B cell (primary cell): ENCODE measurements at regions of chr6 and their contacts with region 1.

Region 1: GRCh38 chr6:69895396-69895795 is 29.0 kb downstream of the COL19A1 start:
- DNase-seq: no peak
- ATAC-seq: no peak
- H3K4me3 ChIP-seq: no peak overlapping the region
- H3K4me3 Mint-ChIP-seq: no peak overlapping the region
- H3K27ac ChIP-seq: peak overlapping the region in 1 of 2 donors; percentile 73
- H3K27ac Mint-ChIP-seq: peak overlapping the region; percentile 90
- H3K4me1 ChIP-seq: peaks cover 26 to 35% of the 10 kb centered on the region in 2 donors
- H3K4me1 Mint-ChIP-seq: peaks cover 40% of the 10 kb centered on the region
- H3K27me3 ChIP-seq: no peaks in the 10 kb centered on the region
- H3K27me3 Mint-ChIP-seq: no peaks in the 10 kb centered on the region
- CTCF ChIP-seq: no peak

Region 2: DNA sequence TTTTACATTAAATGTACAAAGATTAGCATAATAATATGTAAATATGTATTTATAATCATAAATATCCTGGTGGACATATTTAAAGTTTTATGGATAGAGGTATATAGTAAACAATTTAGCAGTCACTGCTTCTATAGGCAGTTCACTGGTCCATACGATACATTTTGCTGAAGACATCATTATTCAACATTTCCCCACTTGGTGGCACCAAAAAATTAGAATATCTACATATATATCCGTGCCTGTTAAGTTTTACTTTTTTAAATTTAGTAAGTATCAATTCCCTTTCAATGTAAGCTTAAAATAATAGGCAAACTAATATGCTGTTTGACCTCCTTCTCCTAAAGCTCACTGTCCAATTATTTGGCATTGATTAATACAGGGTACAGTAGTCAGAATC is 162.8 kb before region 1 on chr6:
- CTCF ChIA-PET with region 1: no interaction called
- POLR2A ChIA-PET with region 1: no interaction called
- intact Hi-C with region 1: no loop called
- DNase-seq: peak; percentile 44
- ATAC-seq: peak; percentile 45
- H3K4me3 ChIP-seq: no peak overlapping the region
- H3K4me3 Mint-ChIP-seq: no peak overlapping the region
- H3K27ac ChIP-seq: peak overlapping the region in 1 of 2 donors; percentile 34
- H3K27ac Mint-ChIP-seq: no peak overlapping the region
- H3K4me1 ChIP-seq: no peaks in the 10 kb centered on the region
- H3K4me1 Mint-ChIP-seq: peaks cover 16% of the 10 kb centered on the region
- H3K27me3 ChIP-seq: no peaks in the 10 kb centered on the region
- H3K27me3 Mint-ChIP-seq: no peaks in the 10 kb centered on the region
- CTCF ChIP-seq: peak; percentile 61

Region 3: DNA sequence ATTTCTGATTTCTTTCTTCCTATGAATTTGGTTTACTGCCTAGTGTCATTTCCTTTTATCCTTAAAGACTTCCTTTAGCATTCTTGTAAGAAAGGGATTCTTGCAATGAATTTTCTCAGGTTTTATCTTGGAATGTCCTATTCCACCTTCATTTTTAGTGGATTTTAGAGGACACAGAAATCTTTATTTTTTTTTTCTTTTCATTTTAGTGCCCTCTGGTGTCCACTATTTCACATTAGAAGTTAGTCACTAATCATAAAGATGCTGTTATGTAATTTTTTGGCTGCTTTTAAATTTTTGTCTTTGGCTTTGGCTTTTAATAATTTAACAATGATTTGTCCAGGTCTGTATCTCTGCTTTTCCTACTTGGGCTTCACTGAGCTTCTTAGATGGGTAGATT is 126.7 kb before region 1 on chr6:
- CTCF ChIA-PET with region 1: no interaction called
- POLR2A ChIA-PET with region 1: no interaction called
- intact Hi-C with region 1: no loop called
- DNase-seq: no peak
- ATAC-seq: no peak
- H3K4me3 ChIP-seq: no peak overlapping the region
- H3K4me3 Mint-ChIP-seq: no peak overlapping the region
- H3K27ac ChIP-seq: peak overlapping the region in 1 of 2 donors; percentile 40
- H3K27ac Mint-ChIP-seq: peak overlapping the region; percentile 33
- H3K4me1 ChIP-seq: peaks cover 0 to 6% of the 10 kb centered on the region in 2 donors
- H3K4me1 Mint-ChIP-seq: peaks cover 51% of the 10 kb centered on the region
- H3K27me3 ChIP-seq: no peaks in the 10 kb centered on the region
- H3K27me3 Mint-ChIP-seq: no peaks in the 10 kb centered on the region
- CTCF ChIP-seq: no peak

Region 4: GRCh38 chr6:70045413-70045812 is 150.0 kb after region 1 on chr6:
- CTCF ChIA-PET with region 1: no interaction called
- POLR2A ChIA-PET with region 1: interaction called, 11 read pairs
- intact Hi-C with region 1: no loop called
- DNase-seq: no peak
- ATAC-seq: no peak
- H3K4me3 ChIP-seq: no peak overlapping the region
- H3K4me3 Mint-ChIP-seq: no peak overlapping the region
- H3K27ac ChIP-seq: no peak overlapping the region
- H3K27ac Mint-ChIP-seq: no peak overlapping the region
- H3K4me1 ChIP-seq: no peaks in the 10 kb centered on the region
- H3K4me1 Mint-ChIP-seq: no peaks in the 10 kb centered on the region
- H3K27me3 ChIP-seq: no peaks in the 10 kb centered on the region
- H3K27me3 Mint-ChIP-seq: no peaks in the 10 kb centered on the region
- CTCF ChIP-seq: no peak